GM12878 (cell line): ENCODE measurements at regions of chr2 and their contacts with region 1.

Region 1: DNA sequence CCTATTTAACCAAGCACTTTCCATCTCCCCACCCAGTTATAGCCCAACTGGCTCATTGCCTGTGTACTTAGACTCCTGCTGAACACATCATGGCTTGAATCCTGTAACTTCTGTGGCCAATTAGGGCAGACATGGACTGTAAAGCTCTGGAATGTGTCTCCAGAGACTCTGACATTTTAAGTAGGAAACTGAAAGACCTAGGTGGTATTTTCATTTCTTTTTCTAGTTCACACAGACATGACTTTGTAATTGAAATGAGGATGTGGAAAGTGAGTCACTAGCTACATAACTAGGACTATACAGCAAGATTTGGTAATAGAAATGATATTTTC is 12.2 kb downstream of the DOK1 start:
- DNase-seq: no peak
- ATAC-seq: peak; percentile 59
- H3K4me3 ChIP-seq: no peak overlapping the region; the same call in 1 of the 2 replicates
- H3K27ac ChIP-seq: peak overlapping the region; percentile 77
- H3K4me1 ChIP-seq: peaks cover 57% of the 10 kb centered on the region
- H3K27me3 ChIP-seq: no peaks in the 10 kb centered on the region
- CTCF ChIP-seq: no peak
- EP300 ChIP-seq: peak; percentile 38 to 63; a peak in 3 of 4 replicates
- POLR2A ChIP-seq: no peak
- RAD21 ChIP-seq: no peak

Region 2: DNA sequence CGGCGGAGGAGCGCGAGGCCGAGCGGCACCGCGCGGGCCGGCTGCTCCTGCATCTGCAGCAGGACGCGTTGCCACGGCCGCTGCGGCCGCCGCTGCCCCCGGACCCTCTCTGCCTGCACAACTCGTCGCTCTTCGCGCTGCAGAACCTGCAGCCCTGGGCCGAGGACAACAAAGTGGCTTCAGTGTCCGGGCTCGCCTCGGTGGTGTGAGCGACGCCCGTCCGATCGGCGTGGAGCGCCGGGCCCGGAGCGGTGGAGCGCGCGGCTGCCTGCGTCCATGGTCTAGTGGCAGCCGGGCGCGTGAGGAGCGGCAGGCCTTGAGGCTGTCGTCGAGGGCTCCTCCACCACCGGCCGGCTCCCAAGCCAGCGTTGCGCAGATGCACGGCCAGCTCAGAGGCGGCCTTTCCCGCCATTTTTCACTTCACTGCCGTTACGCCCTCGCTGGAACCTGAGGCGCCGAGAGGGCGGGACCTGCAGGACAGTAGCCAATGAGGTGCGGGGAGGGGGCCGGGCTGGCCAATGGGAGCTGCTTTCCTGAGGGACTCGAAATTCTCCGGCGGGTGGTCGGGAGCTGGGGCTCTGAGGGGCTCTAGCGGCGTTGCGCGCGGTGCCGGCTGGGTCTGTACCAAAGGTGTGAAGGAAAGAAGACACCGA is 50.6 kb before region 1 on chr2:
- CTCF ChIA-PET with region 1: no interaction called
- POLR2A ChIA-PET with region 1: no interaction called
- RAD21 ChIA-PET with region 1: no interaction called
- SMC1A ChIA-PET with region 1: no interaction called
- in situ Hi-C with region 1: no loop called
- intact Hi-C with region 1: no loop called
- DNase-seq: no peak
- ATAC-seq: peak; percentile 70
- H3K4me3 ChIP-seq: peak overlapping the region; percentile 31; the same call in 1 of the 2 replicates
- H3K27ac ChIP-seq: no peak overlapping the region
- H3K4me1 ChIP-seq: peaks cover 13% of the 10 kb centered on the region; the same call in 1 of the 2 replicates
- H3K27me3 ChIP-seq: peaks cover 18 to 31% of the 10 kb centered on the region in 2 experiments
- CTCF ChIP-seq: no peak
- EP300 ChIP-seq: no peak
- POLR2A ChIP-seq: no peak
- RAD21 ChIP-seq: no peak

Region 3: DNA sequence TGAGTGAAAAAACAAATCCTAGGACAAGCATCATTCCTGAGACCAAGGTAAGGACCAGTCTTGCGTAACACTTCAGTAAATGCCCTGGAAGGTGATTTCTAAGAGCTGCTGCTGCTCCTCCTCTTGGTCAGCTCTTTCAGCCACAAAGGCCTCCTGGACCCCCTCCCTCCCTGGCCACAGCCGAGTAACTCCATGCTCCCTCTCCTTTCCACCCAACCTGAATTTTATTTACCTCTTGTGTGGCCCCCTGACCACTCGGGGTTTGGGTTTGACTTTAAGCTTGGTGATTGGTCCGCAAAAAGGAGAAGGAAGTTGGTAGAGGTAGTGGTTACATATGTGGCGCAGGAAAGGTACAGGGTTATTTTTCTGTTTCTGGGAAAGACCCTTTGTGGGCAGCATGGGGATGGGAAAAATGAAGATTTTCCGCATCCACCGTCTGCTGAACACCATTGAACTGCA is 27.8 kb before region 1 on chr2:
- CTCF ChIA-PET with region 1: interaction called, 5 read pairs
- POLR2A ChIA-PET with region 1: interaction called, 441 read pairs
- RAD21 ChIA-PET with region 1: interaction called, 7 read pairs
- SMC1A ChIA-PET with region 1: interaction called, 27 read pairs
- in situ Hi-C with region 1: no loop called
- intact Hi-C with region 1: no loop called
- DNase-seq: peak; percentile 40
- ATAC-seq: peak; percentile 85
- H3K4me3 ChIP-seq: peak overlapping the region; percentile 12; the same call in 1 of the 2 replicates
- H3K27ac ChIP-seq: peak overlapping the region; percentile 65
- H3K4me1 ChIP-seq: peaks cover 15% of the 10 kb centered on the region
- H3K27me3 ChIP-seq: no peaks in the 10 kb centered on the region
- CTCF ChIP-seq: no peak
- EP300 ChIP-seq: peak in 1 of 2 experiments; percentile 35; a peak in 1 of 4 replicates
- POLR2A ChIP-seq: 0 out of 2 replicates have a peak, but pooled peaks have one; percentile 23
- RAD21 ChIP-seq: no peak

Region 4: DNA sequence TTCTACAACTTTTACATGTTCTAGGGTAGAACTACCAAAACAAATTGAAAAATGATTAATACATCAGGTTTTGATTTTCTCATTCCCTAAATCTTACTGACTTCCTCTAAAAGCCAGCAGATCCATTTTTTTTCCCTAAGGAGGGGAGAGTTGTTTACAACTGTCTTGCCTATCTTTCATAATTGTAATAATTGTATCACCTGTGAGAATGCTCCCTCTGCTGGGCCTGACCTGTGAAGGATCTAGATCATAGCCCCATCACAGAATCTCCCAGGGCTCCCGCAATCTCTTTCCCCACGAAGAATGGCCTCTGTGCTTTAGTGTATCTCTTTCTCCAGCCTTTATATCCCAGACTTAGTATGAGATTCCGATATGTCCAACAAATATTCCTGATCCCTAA is 22.1 kb before region 1 on chr2:
- CTCF ChIA-PET with region 1: interaction called, 10 read pairs
- POLR2A ChIA-PET with region 1: interaction called, 441 read pairs
- RAD21 ChIA-PET with region 1: interaction called, 94 read pairs
- SMC1A ChIA-PET with region 1: interaction called, 61 read pairs
- in situ Hi-C with region 1: no loop called
- intact Hi-C with region 1: no loop called
- DNase-seq: no peak
- ATAC-seq: no peak
- H3K4me3 ChIP-seq: no peak overlapping the region
- H3K27ac ChIP-seq: no peak overlapping the region
- H3K4me1 ChIP-seq: peaks cover 12% of the 10 kb centered on the region
- H3K27me3 ChIP-seq: no peaks in the 10 kb centered on the region
- CTCF ChIP-seq: peak; percentile 33 to 41 (median 39); a peak in 4 of 6 replicates
- EP300 ChIP-seq: no peak
- POLR2A ChIP-seq: no peak
- RAD21 ChIP-seq: peak; percentile 46; the same call in 1 of the 2 replicates

Region 5: GRCh38 chr2:74553892-74554645 is 12.7 kb before region 1 on chr2 and contains the start of gene LOXL3:
- CTCF ChIA-PET with region 1: interaction called, 29 read pairs
- POLR2A ChIA-PET with region 1: interaction called, 441 read pairs
- RAD21 ChIA-PET with region 1: interaction called, 94 read pairs
- SMC1A ChIA-PET with region 1: interaction called, 61 read pairs
- in situ Hi-C with region 1: no loop called
- intact Hi-C with region 1: loop called (anchors 2 kb)
- DNase-seq: no peak
- ATAC-seq: peak; percentile 20
- H3K4me3 ChIP-seq: peak within 1 kb of the TSS; percentile 95
- H3K27ac ChIP-seq: peak within 1 kb of the TSS; percentile 93
- H3K4me1 ChIP-seq: peaks cover 29% of the 10 kb centered on the region
- H3K27me3 ChIP-seq: no peaks in the 10 kb centered on the region
- CTCF ChIP-seq: no peak; a peak in 1 of 6 replicates
- EP300 ChIP-seq: peak in 1 of 2 experiments; percentile 28; a peak in 1 of 4 replicates
- POLR2A ChIP-seq: peak; percentile 62; the same call in 1 of the 2 replicates
- RAD21 ChIP-seq: 0 out of 2 replicates have a peak, but pooled peaks have one; percentile 4
- polyA plus RNA-seq, gene LOXL3: 6.2 to 6.7 TPM